Activated CD8-positive, alpha-beta memory T cell treated with anti-CD3 and anti-CD28 coated beads, Interleukin-2, amount 10 ng/mL, durations not matched to agents 7 days and 5 days (primary cell): ENCODE measurements at regions of chr14 and their contacts with region 1.

Region 1: GRCh38 chr14:105300792-105301533 is at the start of gene BRF1:
- DNase-seq: peak; percentile 100
- ATAC-seq: peak; percentile 91
- H3K4me3 Mint-ChIP-seq: peak within 1 kb of the TSS; percentile 84
- H3K27ac Mint-ChIP-seq: peak within 1 kb of the TSS; percentile 95
- H3K4me1 Mint-ChIP-seq: peaks cover 41% of the 10 kb centered on the region
- H3K27me3 Mint-ChIP-seq: peaks cover 3% of the 10 kb centered on the region
- total RNA-seq, gene BRF1: 32.2 to 51.8 TPM

Region 2: DNA sequence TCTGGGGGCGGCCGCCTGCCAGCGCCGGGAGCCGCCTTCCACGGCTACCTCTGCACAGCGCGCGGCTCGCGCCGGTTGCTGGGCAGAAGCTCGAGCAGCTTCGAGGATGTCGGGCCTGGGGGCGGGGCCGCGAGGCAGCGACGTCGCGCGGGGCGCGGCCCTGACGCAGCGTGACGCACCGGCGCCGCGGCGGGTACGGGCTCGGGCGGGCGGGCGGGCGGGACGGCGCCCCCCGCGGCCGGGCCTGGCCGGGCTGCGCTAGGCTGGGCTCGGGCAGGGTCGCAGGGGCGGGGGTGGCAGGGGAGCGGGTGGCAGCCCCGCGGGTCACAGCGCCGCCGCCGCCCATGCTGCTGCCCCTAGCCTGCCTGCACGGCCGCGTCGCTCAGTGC is 52.6 kb before region 1 on chr14 and contains the start of gene BTBD6:
- CTCF ChIA-PET with region 1: interaction called, 10 read pairs
- DNase-seq: peak; percentile 92
- ATAC-seq: peak; percentile 96
- H3K4me3 Mint-ChIP-seq: peak within 1 kb of the TSS; percentile 73
- H3K27ac Mint-ChIP-seq: peak within 1 kb of the TSS; percentile 72
- H3K4me1 Mint-ChIP-seq: peaks cover 34% of the 10 kb centered on the region
- H3K27me3 Mint-ChIP-seq: no peaks in the 10 kb centered on the region
- total RNA-seq, gene BTBD6: 47.1 to 49.0 TPM

Region 3: DNA sequence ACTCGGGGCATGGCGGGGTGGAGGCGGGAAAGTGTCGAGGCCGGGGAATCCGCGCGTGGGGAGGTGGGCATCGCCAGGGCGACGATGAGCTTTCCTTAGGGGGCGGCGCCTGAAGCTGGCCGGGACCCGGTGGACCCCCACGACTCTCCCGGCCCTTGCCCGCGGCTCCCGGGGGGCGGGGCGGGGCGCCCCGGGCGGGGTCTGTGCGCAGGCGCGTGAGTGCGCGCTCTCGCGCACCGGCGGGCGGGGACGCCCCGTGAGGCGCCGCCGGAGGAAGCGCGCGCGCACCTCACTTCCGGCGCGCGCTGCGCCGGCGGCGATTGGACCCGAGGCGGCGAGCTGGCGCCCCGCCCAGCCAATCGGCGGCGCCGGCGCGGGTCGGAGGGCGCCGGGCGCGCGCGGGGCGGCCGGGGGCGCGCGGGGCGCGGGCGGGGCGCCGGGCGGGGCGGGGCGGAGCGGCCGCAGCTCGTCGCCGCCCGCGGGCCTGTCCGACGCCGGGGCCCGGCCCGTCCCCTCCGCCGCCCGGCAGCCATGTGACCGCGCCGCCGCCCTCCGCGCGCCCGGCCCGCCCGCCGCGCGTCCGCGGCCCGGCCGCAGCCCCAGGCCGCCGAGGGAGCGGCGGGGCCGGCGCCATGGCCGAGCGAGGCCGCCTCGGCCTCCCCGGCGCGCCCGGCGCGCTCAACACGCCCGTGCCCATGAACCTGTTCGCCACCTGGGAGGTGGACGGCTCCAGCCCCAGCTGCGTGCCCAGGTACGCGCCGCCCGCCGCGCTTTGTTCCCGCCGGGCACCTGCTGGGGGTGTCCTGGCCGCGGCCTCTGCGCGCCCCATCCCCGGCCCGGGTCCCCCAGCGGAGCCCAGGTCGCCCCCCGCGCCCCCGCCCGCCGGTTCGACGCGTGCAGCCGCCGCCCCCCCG is 13.6 kb after region 1 on chr14 and contains the start of gene PACS2:
- CTCF ChIA-PET with region 1: interaction called, 13 read pairs
- DNase-seq: peak; percentile 77
- ATAC-seq: peak; percentile 88
- H3K4me3 Mint-ChIP-seq: peak within 1 kb of the TSS; percentile 76
- H3K27ac Mint-ChIP-seq: peak within 1 kb of the TSS; percentile 62
- H3K4me1 Mint-ChIP-seq: peaks cover 34% of the 10 kb centered on the region
- H3K27me3 Mint-ChIP-seq: no peaks in the 10 kb centered on the region
- total RNA-seq, gene PACS2: 27.8 to 40.2 TPM

Region 4: DNA sequence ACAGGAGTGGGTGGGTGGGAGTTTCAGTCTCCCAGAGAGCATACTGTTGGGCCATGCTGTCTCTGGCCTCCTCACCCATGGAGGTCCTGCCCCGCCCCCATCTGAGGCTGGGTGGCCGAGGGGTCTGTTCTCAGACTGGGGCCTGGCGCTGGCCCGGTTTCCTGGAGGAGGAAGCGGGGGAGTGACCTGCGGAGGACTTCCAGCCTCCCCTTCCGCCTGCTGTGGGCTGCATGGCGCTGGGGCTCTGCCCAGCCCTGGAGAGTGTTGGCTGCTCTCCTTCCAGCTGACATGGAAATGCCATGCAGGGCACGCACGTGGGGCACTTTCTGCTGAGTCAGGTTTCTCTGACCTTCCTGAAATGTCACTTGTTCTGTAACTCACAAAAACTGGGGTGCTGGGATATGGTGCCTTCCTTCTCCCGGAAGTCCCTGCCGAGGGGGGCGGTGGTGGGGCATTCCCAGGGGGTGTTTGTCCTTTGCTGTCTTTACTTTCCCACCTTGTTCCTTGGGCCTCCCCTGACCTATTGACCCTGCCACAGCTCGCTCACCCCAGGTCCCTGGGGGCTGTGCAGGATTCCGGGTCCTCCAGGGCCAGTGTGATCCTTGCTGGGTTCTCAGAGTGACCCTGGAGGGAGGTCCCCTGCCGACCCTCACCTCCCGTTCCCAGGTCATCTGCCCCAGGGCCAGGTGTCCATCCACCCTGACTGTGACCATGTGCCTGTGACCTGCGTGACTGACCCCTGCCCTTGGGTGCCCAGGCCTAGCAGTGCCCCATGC is 37.2 kb after region 1 on chr14:
- CTCF ChIA-PET with region 1: no interaction called
- DNase-seq: no peak
- ATAC-seq: no peak
- H3K4me3 Mint-ChIP-seq: no peak overlapping the region
- H3K27ac Mint-ChIP-seq: no peak overlapping the region
- H3K4me1 Mint-ChIP-seq: no peaks in the 10 kb centered on the region
- H3K27me3 Mint-ChIP-seq: no peaks in the 10 kb centered on the region

Region 5: GRCh38 chr14:105351920-105352851 is 51.2 kb after region 1 on chr14:
- CTCF ChIA-PET with region 1: interaction called, 11 read pairs
- DNase-seq: peak; percentile 93
- ATAC-seq: peak; percentile 96
- H3K4me3 Mint-ChIP-seq: no peak overlapping the region
- H3K27ac Mint-ChIP-seq: no peak overlapping the region
- H3K4me1 Mint-ChIP-seq: peaks cover 2% of the 10 kb centered on the region
- H3K27me3 Mint-ChIP-seq: no peaks in the 10 kb centered on the region

Region 6: GRCh38 chr14:105776924-105777323 is 476.0 kb after region 1 on chr14:
- CTCF ChIA-PET with region 1: no interaction called
- DNase-seq: no peak
- ATAC-seq: no peak
- H3K4me3 Mint-ChIP-seq: no peak overlapping the region
- H3K27ac Mint-ChIP-seq: no peak overlapping the region
- H3K4me1 Mint-ChIP-seq: peaks cover 2% of the 10 kb centered on the region
- H3K27me3 Mint-ChIP-seq: peaks cover 6% of the 10 kb centered on the region